ENCODE measurements at regions of chr14 and their contacts with region 1.

Region 1: GRCh38 chr14:68598621-68599447 is 194.0 kb downstream of the ZFP36L1 start:
- DNase-seq: peak; percentile 97
- ATAC-seq: peak; percentile 87
- H3K4me3 ChIP-seq: peak overlapping the region; percentile 7 to 39; a peak in 3 of 4 replicates
- H3K27ac ChIP-seq: peak overlapping the region; percentile 94
- H3K4me1 ChIP-seq: peaks cover 45 to 72% of the 10 kb centered on the region in 2 experiments
- H3K27me3 ChIP-seq: no peaks in the 10 kb centered on the region
- CTCF ChIP-seq: no peak
- POLR2A ChIP-seq: no peak
- RAD21 ChIP-seq: peak; percentile 50; the same call in 1 of the 2 replicates

Region 2: GRCh38 chr14:68295316-68295816 is 303.5 kb before region 1 on chr14:
- CTCF ChIA-PET with region 1: no interaction called
- POLR2A ChIA-PET with region 1: no interaction called
- RAD21 ChIA-PET with region 1: no interaction called
- intact Hi-C with region 1: no loop called
- DNase-seq: peak; percentile 15
- ATAC-seq: peak; percentile 82
- H3K4me3 ChIP-seq: 0 out of 4 replicates have a peak overlapping the region, but pooled peaks of 1 of the 2 experiments have one; percentile 3
- H3K27ac ChIP-seq: peak overlapping the region; percentile 69
- H3K4me1 ChIP-seq: peaks cover 58 to 64% of the 10 kb centered on the region in 2 experiments
- H3K27me3 ChIP-seq: no peaks in the 10 kb centered on the region
- CTCF ChIP-seq: no peak
- POLR2A ChIP-seq: no peak
- RAD21 ChIP-seq: no peak

Region 3: GRCh38 chr14:68466491-68467032 is 132.3 kb before region 1 on chr14:
- CTCF ChIA-PET with region 1: no interaction called
- POLR2A ChIA-PET with region 1: no interaction called
- RAD21 ChIA-PET with region 1: no interaction called
- intact Hi-C with region 1: no loop called
- DNase-seq: peak; percentile 78
- ATAC-seq: peak; percentile 55
- H3K4me3 ChIP-seq: peak overlapping the region; percentile 1 to 41
- H3K27ac ChIP-seq: peak overlapping the region; percentile 92
- H3K4me1 ChIP-seq: peaks cover 73 to 84% of the 10 kb centered on the region in 2 experiments
- H3K27me3 ChIP-seq: no peaks in the 10 kb centered on the region
- CTCF ChIP-seq: no peak
- POLR2A ChIP-seq: no peak
- RAD21 ChIP-seq: no peak

Region 4: DNA sequence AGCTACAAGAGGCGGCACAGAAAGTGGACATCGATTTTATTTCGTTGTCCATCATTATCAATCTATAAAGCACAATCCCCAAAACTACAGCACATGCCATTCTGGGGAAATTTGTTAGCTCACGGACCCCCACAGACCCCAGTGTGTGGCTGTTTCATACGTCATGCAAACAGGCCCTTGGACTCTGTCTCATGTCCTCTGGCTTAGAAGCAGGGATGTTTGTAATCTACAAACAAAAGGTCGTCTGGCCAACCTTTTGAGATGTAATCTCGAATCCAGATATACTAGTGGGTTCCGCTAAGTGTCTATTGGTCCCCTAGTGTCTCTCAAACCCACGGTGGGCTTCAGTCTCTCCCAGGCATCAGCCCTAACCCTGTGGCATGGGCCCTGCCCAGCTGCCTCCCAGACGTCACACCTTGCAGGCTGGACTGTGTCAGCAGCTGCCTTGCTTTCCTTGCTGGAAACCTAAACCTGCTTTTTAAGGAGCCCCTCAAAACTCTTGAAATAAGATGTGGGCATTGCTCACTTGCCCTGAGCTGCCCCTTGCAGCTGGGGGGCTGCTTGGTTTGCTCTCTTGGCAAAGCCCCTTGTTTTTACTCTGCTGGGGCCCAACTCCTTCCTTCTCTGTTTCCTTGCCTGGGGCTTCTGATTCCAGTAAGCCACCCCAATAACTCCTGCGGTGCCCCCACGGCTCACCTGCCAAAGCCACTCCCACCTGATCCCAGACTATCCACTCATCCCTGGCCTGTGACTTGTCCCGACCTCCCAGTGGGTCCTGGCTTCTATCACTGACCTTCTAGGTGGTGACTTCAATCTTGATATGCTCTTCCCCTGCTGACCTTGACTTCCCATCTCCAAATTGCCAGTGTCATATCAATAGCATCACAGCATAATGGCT is 26.7 kb before region 1 on chr14:
- CTCF ChIA-PET with region 1: no interaction called
- POLR2A ChIA-PET with region 1: no interaction called
- RAD21 ChIA-PET with region 1: no interaction called
- intact Hi-C with region 1: no loop called
- DNase-seq: no peak
- ATAC-seq: no peak
- H3K4me3 ChIP-seq: no peak overlapping the region
- H3K27ac ChIP-seq: no peak overlapping the region
- H3K4me1 ChIP-seq: peaks cover 28 to 34% of the 10 kb centered on the region in 2 experiments
- H3K27me3 ChIP-seq: no peaks in the 10 kb centered on the region
- CTCF ChIP-seq: no peak
- POLR2A ChIP-seq: no peak
- RAD21 ChIP-seq: no peak

Region 5: DNA sequence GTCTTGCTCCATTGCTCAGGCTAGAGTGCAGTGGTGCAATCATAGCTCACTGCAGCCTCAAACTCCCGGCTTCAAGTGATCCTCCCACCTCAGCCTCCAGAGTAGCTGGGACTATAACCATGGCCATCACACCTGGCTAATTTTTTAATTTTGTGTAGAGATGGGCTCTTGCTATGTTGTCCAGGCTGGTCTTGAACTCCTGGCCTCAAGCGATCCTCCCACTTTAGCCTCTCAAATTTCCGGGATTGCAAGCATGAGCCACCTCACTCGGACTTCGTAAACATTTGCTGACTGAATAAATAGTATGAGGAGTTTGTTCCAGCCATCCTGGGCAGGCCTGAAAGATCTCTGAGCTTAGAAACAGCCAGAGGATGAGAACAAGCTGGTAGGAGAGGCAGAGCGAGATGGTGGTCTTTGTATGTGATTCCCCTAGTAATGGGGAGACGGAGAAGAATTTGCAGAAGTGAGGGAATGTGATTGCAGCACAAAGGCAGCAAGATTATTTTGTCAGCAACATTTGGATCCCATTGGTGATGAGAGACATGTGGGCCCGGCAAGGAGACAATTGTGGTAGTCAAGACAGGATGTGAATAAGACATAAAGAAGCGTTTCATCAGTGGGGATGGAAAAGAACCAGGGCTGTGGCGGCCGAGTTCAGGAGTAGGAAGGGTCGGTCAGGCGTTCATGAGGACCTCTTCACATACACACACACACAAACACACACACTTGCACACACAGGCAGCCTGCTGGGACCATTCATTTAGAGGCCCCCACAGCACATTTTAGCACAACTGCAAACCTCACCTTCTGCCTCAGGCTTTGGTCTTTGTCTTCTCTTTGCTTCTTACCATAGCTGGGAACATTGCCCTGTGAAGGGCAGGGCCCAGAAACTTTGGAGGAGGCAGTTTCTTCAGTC is 38.5 kb after region 1 on chr14:
- CTCF ChIA-PET with region 1: no interaction called
- POLR2A ChIA-PET with region 1: no interaction called
- RAD21 ChIA-PET with region 1: no interaction called
- intact Hi-C with region 1: no loop called
- DNase-seq: no peak
- ATAC-seq: no peak
- H3K4me3 ChIP-seq: no peak overlapping the region
- H3K27ac ChIP-seq: no peak overlapping the region
- H3K4me1 ChIP-seq: peaks cover 16 to 17% of the 10 kb centered on the region in 2 experiments; a peak in 2 of 4 replicates
- H3K27me3 ChIP-seq: no peaks in the 10 kb centered on the region
- CTCF ChIP-seq: no peak
- POLR2A ChIP-seq: no peak
- RAD21 ChIP-seq: no peak

Region 6: DNA sequence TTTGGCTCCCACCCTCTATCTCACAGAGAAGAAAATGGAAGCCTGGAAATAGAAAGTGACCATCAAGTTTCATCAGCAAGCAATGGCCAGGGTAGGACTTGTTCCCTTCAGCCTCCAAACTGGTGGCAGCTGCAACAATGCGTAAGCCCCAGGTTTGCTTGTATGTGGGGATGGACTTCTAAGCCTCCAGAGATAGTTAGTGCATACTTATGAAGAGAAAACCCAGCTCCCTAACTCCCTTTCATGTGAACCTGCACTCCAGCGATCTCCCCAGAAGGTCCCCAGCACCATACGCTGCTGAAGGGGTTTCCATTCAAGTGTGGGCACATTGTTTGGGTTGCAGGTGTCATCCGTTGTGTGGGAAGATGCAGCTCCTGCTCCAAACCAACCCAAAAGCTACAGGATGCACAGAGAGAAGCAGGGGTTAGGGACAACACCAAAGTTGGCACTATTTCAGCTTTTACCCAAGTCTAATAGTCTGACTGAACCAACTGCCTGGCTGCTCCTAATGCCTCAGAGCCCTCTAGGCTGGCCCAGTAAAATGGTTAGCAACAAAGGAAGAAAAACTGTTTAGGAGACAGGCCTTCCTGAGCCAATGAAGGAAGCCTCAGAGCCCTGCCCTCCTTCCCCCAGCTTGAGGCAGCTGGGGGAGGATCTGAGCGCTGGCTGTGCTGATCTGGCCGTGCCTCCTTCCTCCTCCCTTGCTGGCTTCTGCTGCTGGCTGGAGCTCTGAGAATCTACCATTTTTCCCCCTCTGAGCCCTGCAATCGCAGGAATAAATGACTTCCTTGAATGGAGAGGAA is 181.7 kb after region 1 on chr14:
- CTCF ChIA-PET with region 1: no interaction called
- POLR2A ChIA-PET with region 1: no interaction called
- RAD21 ChIA-PET with region 1: no interaction called
- intact Hi-C with region 1: loop called (anchors 2 kb)
- DNase-seq: no peak
- ATAC-seq: peak; percentile 5
- H3K4me3 ChIP-seq: peak overlapping the region; percentile 7 to 41
- H3K27ac ChIP-seq: peak overlapping the region; percentile 88
- H3K4me1 ChIP-seq: peaks cover 78 to 84% of the 10 kb centered on the region in 2 experiments
- H3K27me3 ChIP-seq: no peaks in the 10 kb centered on the region
- CTCF ChIP-seq: no peak
- POLR2A ChIP-seq: no peak
- RAD21 ChIP-seq: no peak

Measured in HCT116 (cell line).